Gastrocnemius medialis (tissue), 4 donors: ENCODE measurements at regions of chr12 and their contacts with region 1.

Region 1: GRCh38 chr12:106136263-106136662 is 2.5 kb downstream of the NUAK1 start:
- DNase-seq: peak; percentile 70 to 80
- ATAC-seq: peak; percentile 28 to 32
- H3K4me3 ChIP-seq: peak overlapping the region; percentile 81 to 88 (median 86)
- H3K27ac ChIP-seq: peak overlapping the region; percentile 94 to 99 (median 99)
- H3K4me1 ChIP-seq: peaks cover 44 to 73% of the 10 kb centered on the region in 2 donors
- H3K27me3 ChIP-seq: no peaks in the 10 kb centered on the region
- CTCF ChIP-seq: peak; percentile 87 to 93 (median 87)
- POLR2A ChIP-seq: peak; percentile 26 to 48

Region 2: GRCh38 chr12:105420659-105421240 is 715.5 kb before region 1 on chr12:
- in situ Hi-C with region 1: loop called (anchors 5 to 25 kb)
- intact Hi-C with region 1: loop called (anchors 2 kb)
- DNase-seq: peak; percentile 55 to 73
- ATAC-seq: peak; percentile 91 to 94
- H3K4me3 ChIP-seq: no peak overlapping the region
- H3K27ac ChIP-seq: peak overlapping the region in 1 of 4 donors; percentile 10
- H3K4me1 ChIP-seq: peaks cover 0 to 6% of the 10 kb centered on the region in 2 donors
- H3K27me3 ChIP-seq: no peaks in the 10 kb centered on the region
- CTCF ChIP-seq: peak; percentile 83 to 96 (median 90)
- POLR2A ChIP-seq: no peak

Region 3: DNA sequence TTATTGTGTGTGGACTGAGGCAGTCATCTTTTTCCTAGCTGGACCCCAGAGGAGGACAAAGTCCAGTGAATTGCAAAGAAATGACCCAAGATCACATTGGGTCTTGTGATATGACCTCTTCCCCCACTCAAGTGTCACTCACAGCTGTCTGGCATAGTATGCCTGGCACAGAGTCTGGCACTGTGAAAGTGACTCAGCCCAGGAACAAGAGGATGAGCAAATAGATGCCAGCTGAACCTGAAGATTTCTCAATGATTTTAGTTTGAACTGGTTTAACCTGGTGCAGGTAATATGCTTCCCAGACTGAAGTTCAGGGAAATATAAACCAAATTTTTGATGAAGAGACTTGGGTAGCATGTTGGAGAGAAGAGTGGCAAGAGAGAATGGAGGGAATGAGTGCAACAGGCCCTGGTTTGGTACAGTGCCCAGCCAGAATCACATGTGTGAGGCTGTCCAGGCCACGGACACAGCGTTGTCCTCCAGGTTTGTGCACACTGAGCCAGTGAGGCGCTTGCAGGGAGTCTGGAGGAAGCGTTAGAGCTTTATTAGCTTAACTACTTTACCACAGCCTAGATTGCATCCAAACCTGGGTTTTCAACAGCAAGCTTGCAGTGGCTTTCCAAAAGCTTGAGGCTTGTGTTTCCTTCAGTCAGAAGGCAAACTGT is 330.4 kb before region 1 on chr12:
- in situ Hi-C with region 1: loop called in 2 of 4 experiments (anchors 25 kb)
- intact Hi-C with region 1: loop called (anchors 5 kb)
- DNase-seq: peak; percentile 43 to 77
- ATAC-seq: peak; percentile 95 to 98
- H3K4me3 ChIP-seq: no peak overlapping the region
- H3K27ac ChIP-seq: peak overlapping the region; percentile 39 to 73 (median 54)
- H3K4me1 ChIP-seq: peaks cover 8 to 12% of the 10 kb centered on the region in 2 donors
- H3K27me3 ChIP-seq: no peaks in the 10 kb centered on the region
- CTCF ChIP-seq: no peak
- POLR2A ChIP-seq: no peak

Region 4: DNA sequence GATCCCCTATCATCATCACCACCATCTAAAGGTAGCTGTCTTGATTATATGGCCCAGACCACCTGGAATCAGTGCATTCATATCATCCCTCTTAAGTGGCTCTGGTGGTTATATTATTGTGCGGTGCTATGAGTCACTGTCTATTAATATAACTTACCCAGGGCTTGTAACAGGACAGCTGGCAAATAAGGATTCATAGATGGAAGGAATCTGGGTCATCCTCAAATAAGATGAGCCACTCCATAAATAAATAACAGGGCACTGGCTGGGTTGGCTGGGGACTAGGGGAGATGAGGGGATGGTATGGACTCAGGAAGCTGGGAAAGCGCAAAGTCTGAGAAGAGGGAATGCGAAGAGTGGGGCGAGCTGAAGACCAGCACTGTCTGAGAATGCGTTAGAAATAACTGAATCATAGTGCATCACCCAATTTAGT is 213.6 kb before region 1 on chr12:
- in situ Hi-C with region 1: no loop called
- intact Hi-C with region 1: loop called (anchors 1 kb)
- DNase-seq: peak; percentile 40 to 45
- ATAC-seq: peak; percentile 93 to 99
- H3K4me3 ChIP-seq: no peak overlapping the region
- H3K27ac ChIP-seq: peak overlapping the region; percentile 77 to 89 (median 86)
- H3K4me1 ChIP-seq: peaks cover 25 to 34% of the 10 kb centered on the region in 2 donors
- H3K27me3 ChIP-seq: no peaks in the 10 kb centered on the region
- CTCF ChIP-seq: no peak
- POLR2A ChIP-seq: peak in 1 of 2 donors; percentile 26

Region 5: DNA sequence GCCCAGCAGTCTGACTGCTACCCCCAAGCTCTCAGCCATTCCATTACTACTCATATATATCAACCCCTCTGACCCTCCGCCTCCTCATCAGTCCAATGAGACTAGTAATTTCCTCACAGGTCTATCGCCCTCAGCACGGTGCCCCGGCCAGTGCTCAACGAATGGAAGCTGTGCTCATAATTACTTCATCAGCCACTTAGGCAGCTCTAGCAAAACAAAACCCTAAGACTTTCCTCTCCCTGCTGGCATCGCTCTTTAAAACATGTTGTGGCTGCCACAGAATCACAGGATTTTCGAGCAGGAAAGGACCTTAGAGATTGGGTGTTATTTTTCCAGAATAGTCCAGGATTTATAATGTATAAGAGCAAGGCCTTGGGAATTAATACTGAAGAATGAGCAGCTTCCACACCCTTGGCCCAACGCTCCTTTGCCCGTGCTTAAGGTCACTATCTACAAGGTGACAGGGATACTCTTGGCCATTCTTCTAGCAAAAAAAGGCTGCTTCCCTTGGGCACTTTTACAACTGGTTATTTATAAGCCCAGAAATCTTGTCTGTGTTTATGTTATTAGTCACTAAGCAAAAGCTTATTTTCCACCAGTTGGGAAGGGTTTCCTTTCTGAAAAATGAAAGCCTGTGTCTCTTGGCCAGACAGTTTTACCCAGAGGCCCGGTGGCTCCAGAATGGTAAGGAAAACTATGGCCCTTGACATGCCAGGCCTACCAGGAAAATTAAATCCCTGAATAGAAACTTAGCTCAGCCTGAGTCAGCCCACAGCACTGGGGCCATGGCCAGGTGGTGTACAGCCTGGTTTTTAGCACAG is 45.5 kb before region 1 on chr12:
- in situ Hi-C with region 1: no loop called
- intact Hi-C with region 1: loop called (anchors 5 kb)
- DNase-seq: peak; percentile 48 to 71
- ATAC-seq: peak; percentile 87 to 92
- H3K4me3 ChIP-seq: no peak overlapping the region
- H3K27ac ChIP-seq: peak overlapping the region; percentile 79 to 87 (median 85)
- H3K4me1 ChIP-seq: peaks cover 37 to 50% of the 10 kb centered on the region in 2 donors
- H3K27me3 ChIP-seq: no peaks in the 10 kb centered on the region
- CTCF ChIP-seq: no peak
- POLR2A ChIP-seq: no peak

Region 6: DNA sequence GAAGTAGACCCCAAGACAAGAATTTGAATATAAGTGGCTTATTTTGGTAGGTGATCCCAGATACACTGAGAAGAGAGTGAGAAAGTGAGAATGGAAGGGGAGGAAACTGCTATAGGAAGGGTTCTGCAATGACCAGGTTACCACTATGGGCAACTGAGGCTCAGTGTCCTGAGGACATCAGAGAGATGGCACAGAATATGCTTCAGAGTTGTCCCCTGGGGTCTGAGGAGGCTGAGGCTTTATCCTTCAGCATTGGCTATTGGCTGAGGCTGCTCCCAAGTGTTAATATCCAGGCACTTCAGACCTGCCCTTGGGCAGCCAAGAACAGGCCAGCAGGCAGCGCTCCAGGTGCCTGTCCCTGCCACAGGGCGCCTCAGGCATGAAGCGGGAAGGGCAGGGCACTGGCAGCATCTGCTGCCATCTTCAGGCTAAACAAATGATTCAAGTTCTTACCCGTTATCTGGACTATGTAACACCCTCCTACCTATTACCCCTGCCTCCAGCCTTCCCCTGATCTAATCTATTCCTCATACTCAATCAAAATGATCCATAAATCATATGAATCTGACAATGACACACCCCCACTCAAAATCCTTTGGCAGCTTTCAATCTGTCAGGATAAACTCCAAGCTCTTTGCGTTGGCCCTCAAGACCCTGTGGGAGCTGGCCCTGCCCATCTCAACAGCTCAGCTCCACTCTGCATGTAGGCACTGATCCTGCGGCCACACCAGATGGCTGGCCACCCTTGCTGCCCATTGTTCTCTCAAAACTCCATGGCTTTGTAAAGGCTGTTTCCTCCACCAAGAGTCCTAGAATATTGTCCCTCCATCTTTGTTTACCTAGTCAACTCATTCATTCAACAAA is 69.2 kb after region 1 on chr12:
- in situ Hi-C with region 1: no loop called
- intact Hi-C with region 1: loop called (anchors 2 kb)
- DNase-seq: peak; percentile 71 to 82
- ATAC-seq: peak; percentile 87 to 97
- H3K4me3 ChIP-seq: no peak overlapping the region
- H3K27ac ChIP-seq: peak overlapping the region; percentile 5 to 65 (median 36)
- H3K4me1 ChIP-seq: peaks cover 3 to 16% of the 10 kb centered on the region in 2 donors
- H3K27me3 ChIP-seq: no peaks in the 10 kb centered on the region
- CTCF ChIP-seq: peak; percentile 36 to 69 (median 49)
- POLR2A ChIP-seq: no peak